B cell (primary cell): ENCODE measurements at regions of chr12 and their contacts with region 1.

Region 1: GRCh38 chr12:94676031-94676641 is 25.8 kb upstream of the TMCC3 start:
- DNase-seq: peak; percentile 83
- ATAC-seq: peak; percentile 97
- H3K4me3 ChIP-seq: peak overlapping the region in 2 of 5 experiments; percentile 12 to 21
- H3K4me3 Mint-ChIP-seq: peak overlapping the region; percentile 80
- H3K27ac ChIP-seq: peak overlapping the region; percentile 52 to 74
- H3K27ac Mint-ChIP-seq: peak overlapping the region; percentile 86
- H3K4me1 ChIP-seq: peaks cover 32 to 38% of the 10 kb centered on the region in 2 donors
- H3K4me1 Mint-ChIP-seq: peaks cover 38% of the 10 kb centered on the region
- H3K27me3 ChIP-seq: no peaks in the 10 kb centered on the region
- H3K27me3 Mint-ChIP-seq: no peaks in the 10 kb centered on the region
- CTCF ChIP-seq: no peak

Region 2: GRCh38 chr12:94649349-94650142 is 26.6 kb before region 1 on chr12:
- CTCF ChIA-PET with region 1: no interaction called
- POLR2A ChIA-PET with region 1: no interaction called
- intact Hi-C with region 1: loop called (anchors 1 kb)
- DNase-seq: peak; percentile 64
- ATAC-seq: peak; percentile 71
- H3K4me3 ChIP-seq: peak overlapping the region; percentile 21 to 70 (median 60)
- H3K4me3 Mint-ChIP-seq: peak overlapping the region; percentile 90
- H3K27ac ChIP-seq: no peak overlapping the region
- H3K27ac Mint-ChIP-seq: peak overlapping the region; percentile 74
- H3K4me1 ChIP-seq: peaks cover 11 to 18% of the 10 kb centered on the region in 2 donors
- H3K4me1 Mint-ChIP-seq: peaks cover 32% of the 10 kb centered on the region
- H3K27me3 ChIP-seq: peaks cover 0 to 7% (median 2%) of the 10 kb centered on the region in 4 experiments
- H3K27me3 Mint-ChIP-seq: peaks cover 4% of the 10 kb centered on the region
- CTCF ChIP-seq: peak; percentile 56

Region 3: DNA sequence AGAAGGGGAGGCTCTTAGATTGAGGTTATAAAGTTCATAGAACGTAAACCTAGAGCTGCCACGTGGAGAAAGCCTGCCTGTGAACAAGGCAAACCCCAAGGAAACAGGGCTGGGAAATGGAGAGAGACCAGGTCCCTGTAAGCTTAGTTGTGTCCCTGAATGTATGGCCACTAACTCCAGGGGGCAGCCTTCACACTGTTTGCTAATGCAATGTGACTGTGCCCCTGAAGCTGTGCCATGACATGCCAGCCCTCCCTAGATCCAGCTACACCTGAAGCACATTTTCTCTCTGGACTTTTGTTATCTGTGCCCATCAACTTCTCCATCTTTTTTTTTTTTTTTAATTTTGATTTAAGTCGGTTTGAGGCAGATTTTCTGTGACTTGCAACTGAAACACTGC is 34.8 kb after region 1 on chr12:
- CTCF ChIA-PET with region 1: interaction called, 4 read pairs
- POLR2A ChIA-PET with region 1: interaction called, 12 read pairs
- intact Hi-C with region 1: loop called (anchors 5 kb)
- DNase-seq: peak; percentile 57
- ATAC-seq: peak; percentile 71
- H3K4me3 ChIP-seq: no peak overlapping the region
- H3K4me3 Mint-ChIP-seq: no peak overlapping the region
- H3K27ac ChIP-seq: no peak overlapping the region
- H3K27ac Mint-ChIP-seq: no peak overlapping the region
- H3K4me1 ChIP-seq: peaks cover 8 to 9% of the 10 kb centered on the region in 2 donors
- H3K4me1 Mint-ChIP-seq: peaks cover 21% of the 10 kb centered on the region
- H3K27me3 ChIP-seq: no peaks in the 10 kb centered on the region
- H3K27me3 Mint-ChIP-seq: no peaks in the 10 kb centered on the region
- CTCF ChIP-seq: peak; percentile 57

Region 4: DNA sequence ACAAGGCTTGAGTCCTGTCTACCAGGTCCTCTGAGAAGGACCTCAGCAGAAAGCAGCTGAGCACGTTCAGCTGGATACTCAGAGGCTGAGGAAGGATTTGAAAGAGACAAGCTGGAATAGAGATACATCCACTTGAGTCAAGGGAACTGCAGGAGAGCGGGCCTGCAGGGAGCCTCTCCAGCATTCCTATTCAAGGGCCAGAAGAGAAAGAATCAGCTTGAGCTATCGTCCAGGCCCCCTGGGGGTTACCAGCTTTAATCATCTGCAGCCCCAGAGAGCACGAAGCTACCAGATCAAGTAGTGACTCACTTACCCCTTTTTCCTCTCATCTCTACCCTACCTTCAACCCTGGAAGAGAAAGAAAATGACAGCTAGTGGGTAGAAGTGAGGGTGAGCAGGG is 246.4 kb after region 1 on chr12:
- CTCF ChIA-PET with region 1: no interaction called
- POLR2A ChIA-PET with region 1: no interaction called
- intact Hi-C with region 1: no loop called
- DNase-seq: no peak
- ATAC-seq: no peak
- H3K4me3 ChIP-seq: no peak overlapping the region
- H3K4me3 Mint-ChIP-seq: no peak overlapping the region
- H3K27ac ChIP-seq: no peak overlapping the region
- H3K27ac Mint-ChIP-seq: no peak overlapping the region
- H3K4me1 ChIP-seq: peaks cover 0 to 2% of the 10 kb centered on the region in 2 donors
- H3K4me1 Mint-ChIP-seq: peaks cover 10% of the 10 kb centered on the region
- H3K27me3 ChIP-seq: no peaks in the 10 kb centered on the region
- H3K27me3 Mint-ChIP-seq: no peaks in the 10 kb centered on the region
- CTCF ChIP-seq: no peak